BJ (cell line): ENCODE measurements at regions of chr16 and their contacts with region 1.

Region 1: GRCh38 chr16:1054660-1055556 is 17.6 kb upstream of the SSTR5 start:
- DNase-seq: no peak
- H3K4me3 ChIP-seq: no peak overlapping the region
- H3K27me3 ChIP-seq: no peaks in the 10 kb centered on the region; the same call in 1 of the 2 replicates
- CTCF ChIP-seq: peak; percentile 93

Region 2: DNA sequence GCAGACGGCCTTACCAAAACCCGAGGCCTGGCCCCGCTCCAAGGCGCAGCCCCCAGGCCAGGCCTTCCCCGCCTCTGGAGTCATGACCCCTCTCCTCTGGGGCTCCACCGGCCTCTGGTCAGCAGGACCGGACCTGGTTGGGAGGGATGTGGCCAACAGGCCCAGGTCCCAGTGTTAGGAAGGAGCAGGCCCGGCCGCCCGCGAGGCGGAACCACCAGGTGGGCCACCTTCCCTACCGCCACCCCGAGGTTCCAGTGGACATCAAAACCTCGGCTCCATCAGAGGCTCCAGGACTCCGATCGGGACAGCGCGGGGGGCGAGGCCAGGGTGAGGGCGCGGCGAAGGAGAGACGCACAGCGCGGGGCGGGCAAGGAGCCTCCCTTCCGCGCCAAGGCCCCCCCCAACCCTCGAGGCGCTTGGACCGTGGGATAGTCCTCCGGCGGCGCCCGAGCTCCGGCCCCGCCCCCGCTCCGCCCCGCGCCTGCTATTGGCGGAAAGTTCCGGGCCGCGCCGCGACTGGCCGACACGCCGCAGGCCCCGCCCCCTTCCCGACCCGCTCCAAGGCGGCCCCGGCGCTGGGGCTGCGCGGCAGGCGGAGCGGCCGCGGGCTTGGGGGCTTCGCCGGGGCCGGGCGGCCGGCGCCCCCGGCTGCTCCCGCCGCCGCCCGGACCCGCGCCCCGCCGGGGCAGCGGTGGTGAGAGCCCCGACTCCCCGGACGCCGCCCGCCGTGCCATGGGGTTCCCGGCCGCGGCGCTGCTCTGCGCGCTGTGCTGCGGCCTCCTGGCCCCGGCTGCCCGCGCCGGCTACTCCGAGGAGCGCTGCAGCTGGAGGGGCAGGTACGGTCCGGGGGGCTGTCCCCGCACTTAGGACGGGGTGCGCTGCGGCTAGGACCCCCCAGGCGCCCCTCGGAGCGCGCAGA is 340.1 kb before region 1 on chr16 and contains the start of gene METRN:
- CTCF ChIA-PET with region 1: interaction called, 13 read pairs
- POLR2A ChIA-PET with region 1: no interaction called
- DNase-seq: no peak
- H3K4me3 ChIP-seq: peak within 1 kb of the TSS; percentile 64
- H3K27me3 ChIP-seq: no peaks in the 10 kb centered on the region
- CTCF ChIP-seq: no peak
- polyA plus RNA-seq, gene METRN: 33.7 and 40.3 TPM in 2 replicates

Region 3: DNA sequence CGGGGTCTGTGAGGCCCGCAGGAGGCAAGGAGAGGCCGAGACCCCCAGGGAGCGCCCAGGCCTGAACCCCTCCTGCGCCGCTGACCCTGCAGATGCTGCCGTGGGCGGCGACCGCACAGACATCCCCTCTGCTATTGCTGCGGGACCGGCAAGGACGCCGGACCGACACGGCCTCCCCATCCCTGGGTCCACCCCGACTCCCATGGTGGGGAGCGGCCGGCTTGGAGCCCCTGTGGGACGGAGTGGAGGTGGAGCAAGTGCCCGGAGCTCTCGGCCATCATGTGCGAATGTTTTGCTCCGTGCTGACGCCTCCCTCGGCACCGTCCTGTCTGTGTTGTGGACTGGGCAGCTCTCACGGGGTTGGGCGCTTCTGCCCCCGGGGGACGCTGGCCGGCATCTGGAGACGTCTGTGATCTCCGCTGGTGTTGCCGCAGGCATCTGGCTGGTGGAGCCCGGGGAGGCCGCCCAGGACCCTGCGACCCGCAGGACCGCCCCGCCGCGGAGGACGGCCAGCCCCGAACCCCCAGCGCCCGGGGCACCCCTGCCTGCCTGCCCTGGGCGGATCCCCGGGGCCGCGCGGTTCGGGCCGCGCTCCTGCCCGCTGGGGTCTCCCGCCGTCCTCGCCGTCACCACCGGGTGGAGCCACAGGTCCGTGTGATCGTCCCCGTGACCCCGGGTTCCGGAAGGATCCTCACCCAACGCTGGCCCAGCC is 241.5 kb before region 1 on chr16:
- CTCF ChIA-PET with region 1: interaction called, 54 read pairs
- POLR2A ChIA-PET with region 1: no interaction called
- DNase-seq: no peak
- H3K4me3 ChIP-seq: peak overlapping the region; percentile 34
- H3K27me3 ChIP-seq: no peaks in the 10 kb centered on the region
- CTCF ChIP-seq: peak; percentile 68

Region 4: DNA sequence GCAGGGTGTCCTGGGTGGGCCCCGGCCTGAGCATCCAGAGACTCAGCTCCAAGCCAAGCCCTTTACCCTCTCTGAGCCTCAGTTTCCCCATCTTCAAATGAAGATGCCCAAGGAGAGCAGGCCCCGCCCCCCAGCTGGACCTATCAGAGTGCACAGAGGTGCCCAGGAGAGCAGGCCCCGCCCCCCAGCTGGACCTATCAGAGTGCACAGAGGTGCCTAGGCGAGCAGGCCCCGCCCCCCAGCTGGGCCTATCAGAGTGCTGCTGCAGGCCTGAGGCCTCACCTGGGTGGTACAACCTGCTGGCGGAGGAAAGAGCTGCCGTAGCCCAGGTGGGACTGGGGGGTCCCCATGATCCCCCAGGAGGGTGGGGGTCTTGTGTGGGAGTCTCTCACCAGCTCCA is 14.2 kb after region 1 on chr16:
- CTCF ChIA-PET with region 1: interaction called, 32 read pairs
- POLR2A ChIA-PET with region 1: no interaction called
- DNase-seq: no peak
- H3K4me3 ChIP-seq: no peak overlapping the region
- H3K27me3 ChIP-seq: peaks cover 10% of the 10 kb centered on the region
- CTCF ChIP-seq: no peak